Caco-2 (cell line): ENCODE measurements at regions of chr5 and their contacts with region 1.

Region 1: GRCh38 chr5:78056901-78057513 is 237.5 kb downstream of the AP3B1 start:
- DNase-seq: peak in 1 of 2 experiments; percentile 26
- H3K4me3 ChIP-seq: no peak overlapping the region
- H3K4me3 Mint-ChIP-seq: no peak overlapping the region
- H3K27ac Mint-ChIP-seq: no peak overlapping the region
- H3K4me1 ChIP-seq: no peaks in the 10 kb centered on the region
- H3K4me1 Mint-ChIP-seq: no peaks in the 10 kb centered on the region
- H3K27me3 ChIP-seq: no peaks in the 10 kb centered on the region
- H3K27me3 Mint-ChIP-seq: no peaks in the 10 kb centered on the region
- CTCF ChIP-seq: peak in 1 of 2 experiments; percentile 47

Region 2: DNA sequence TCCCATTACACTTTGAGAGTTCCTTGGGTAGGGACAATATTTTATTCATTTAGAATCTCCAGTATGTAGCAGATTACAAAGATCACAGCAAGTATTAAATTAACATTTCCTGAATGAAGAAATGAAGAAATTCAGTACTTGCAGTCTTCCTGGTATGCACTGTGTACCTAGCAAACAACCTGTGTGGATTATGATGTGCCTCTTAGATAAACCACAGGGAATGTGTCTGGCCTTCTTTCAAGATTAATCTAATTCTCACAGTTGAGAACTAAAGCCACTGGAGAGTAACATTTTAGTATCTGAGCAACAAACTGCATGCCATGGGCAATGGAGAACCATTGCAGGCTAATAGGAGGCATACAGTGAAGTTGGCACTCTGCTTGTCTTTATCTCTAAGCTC is 38.1 kb after region 1 on chr5:
- CTCF ChIA-PET with region 1: no interaction called
- POLR2A ChIA-PET with region 1: no interaction called
- intact Hi-C with region 1: no loop called
- DNase-seq: no peak
- H3K4me3 ChIP-seq: no peak overlapping the region
- H3K4me3 Mint-ChIP-seq: no peak overlapping the region
- H3K27ac Mint-ChIP-seq: no peak overlapping the region
- H3K4me1 ChIP-seq: peaks cover 6% of the 10 kb centered on the region; the same call in 1 of the 2 replicates
- H3K4me1 Mint-ChIP-seq: no peaks in the 10 kb centered on the region
- H3K27me3 ChIP-seq: no peaks in the 10 kb centered on the region
- H3K27me3 Mint-ChIP-seq: no peaks in the 10 kb centered on the region
- CTCF ChIP-seq: no peak

Region 3: DNA sequence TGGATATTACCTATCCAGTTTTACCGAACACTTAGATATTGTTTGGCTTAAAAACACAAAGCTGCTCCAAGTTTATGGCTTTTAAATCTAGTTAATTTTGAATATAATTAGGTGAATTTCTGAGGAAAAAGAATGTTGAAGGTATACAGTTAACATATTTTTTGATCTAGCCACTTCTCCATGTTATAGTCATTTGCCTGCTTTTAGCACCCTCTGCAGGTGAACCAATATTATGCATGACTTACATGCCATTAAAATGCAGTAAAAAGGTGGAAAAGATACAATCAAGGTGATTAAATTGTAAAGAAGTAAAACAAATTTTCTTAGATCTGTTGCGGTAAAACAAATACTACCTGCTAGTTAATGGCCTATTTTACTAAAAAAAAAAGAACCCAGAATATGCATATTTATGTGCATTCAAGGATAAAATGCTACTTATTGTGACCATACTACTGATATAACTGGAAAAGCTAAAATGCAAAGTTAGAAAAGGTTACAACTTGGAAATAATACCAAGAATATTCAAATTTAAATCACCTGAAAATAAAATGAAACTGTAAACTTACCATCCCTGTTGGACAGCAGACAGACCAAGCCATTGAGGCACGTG is 105.4 kb after region 1 on chr5:
- CTCF ChIA-PET with region 1: no interaction called
- POLR2A ChIA-PET with region 1: no interaction called
- intact Hi-C with region 1: loop called (anchors 2 kb)
- DNase-seq: peak in 1 of 2 experiments; percentile 47
- H3K4me3 ChIP-seq: no peak overlapping the region
- H3K4me3 Mint-ChIP-seq: no peak overlapping the region
- H3K27ac Mint-ChIP-seq: no peak overlapping the region
- H3K4me1 ChIP-seq: no peaks in the 10 kb centered on the region
- H3K4me1 Mint-ChIP-seq: no peaks in the 10 kb centered on the region
- H3K27me3 ChIP-seq: no peaks in the 10 kb centered on the region
- H3K27me3 Mint-ChIP-seq: no peaks in the 10 kb centered on the region
- CTCF ChIP-seq: peak; percentile 56